Calu3 (cell line): ENCODE measurements at regions of chr15 and their contacts with region 1.

Region 1: GRCh38 chr15:45162771-45163526 is 24.8 kb downstream of the SHF start:
- DNase-seq: peak; percentile 86
- H3K4me3 Mint-ChIP-seq: no peak overlapping the region
- H3K27ac Mint-ChIP-seq: no peak overlapping the region
- H3K4me1 Mint-ChIP-seq: peaks cover 13% of the 10 kb centered on the region
- H3K27me3 Mint-ChIP-seq: no peaks in the 10 kb centered on the region
- CTCF ChIP-seq: peak; percentile 69

Region 2: DNA sequence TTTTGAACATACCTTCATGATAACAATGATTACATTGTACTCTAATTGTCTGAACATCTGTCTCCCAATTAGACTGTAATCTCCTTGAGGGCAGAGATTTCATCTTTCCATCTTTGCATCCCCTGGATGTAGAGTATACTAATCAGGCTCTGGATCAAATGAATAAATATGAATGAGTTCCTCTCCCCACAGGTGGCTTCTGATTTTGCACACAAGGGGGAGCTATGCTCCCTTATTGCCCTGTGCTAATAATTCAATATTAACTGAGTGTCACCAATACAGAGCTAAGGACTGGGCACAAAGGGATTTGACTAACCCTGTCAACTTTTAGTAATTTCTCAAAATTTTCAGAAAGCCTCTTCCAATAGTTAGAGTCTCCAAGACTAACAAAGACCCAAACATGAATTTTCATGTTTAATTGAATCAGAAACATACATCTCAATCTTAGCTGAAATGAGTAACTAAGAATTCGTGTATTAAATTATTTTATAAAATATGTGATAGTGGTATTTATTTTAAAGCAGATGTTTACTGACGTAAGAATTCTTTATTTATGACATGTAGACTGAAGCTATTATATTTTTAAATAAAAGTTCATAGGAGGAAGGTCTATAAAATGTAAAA is 36.3 kb before region 1 on chr15:
- CTCF ChIA-PET with region 1: interaction called, 17 read pairs
- intact Hi-C with region 1: no loop called
- DNase-seq: peak; percentile 62
- H3K4me3 Mint-ChIP-seq: no peak overlapping the region
- H3K27ac Mint-ChIP-seq: no peak overlapping the region
- H3K4me1 Mint-ChIP-seq: no peaks in the 10 kb centered on the region
- H3K27me3 Mint-ChIP-seq: peaks cover 57% of the 10 kb centered on the region
- CTCF ChIP-seq: peak; percentile 67

Region 3: GRCh38 chr15:45205192-45205591 is 42.2 kb after region 1 on chr15:
- CTCF ChIA-PET with region 1: interaction called, 33 read pairs
- intact Hi-C with region 1: loop called (anchors 1 kb)
- DNase-seq: peak; percentile 78
- H3K4me3 Mint-ChIP-seq: no peak overlapping the region
- H3K27ac Mint-ChIP-seq: no peak overlapping the region
- H3K4me1 Mint-ChIP-seq: no peaks in the 10 kb centered on the region
- H3K27me3 Mint-ChIP-seq: no peaks in the 10 kb centered on the region
- CTCF ChIP-seq: peak; percentile 75

Region 4: GRCh38 chr15:45276831-45277230 is 113.9 kb after region 1 on chr15:
- CTCF ChIA-PET with region 1: interaction called, 17 read pairs
- intact Hi-C with region 1: no loop called
- DNase-seq: no peak
- H3K4me3 Mint-ChIP-seq: no peak overlapping the region
- H3K27ac Mint-ChIP-seq: no peak overlapping the region
- H3K4me1 Mint-ChIP-seq: peaks cover 6% of the 10 kb centered on the region
- H3K27me3 Mint-ChIP-seq: no peaks in the 10 kb centered on the region
- CTCF ChIP-seq: no peak